A549 (cell line): ENCODE measurements at regions of chr11 and their contacts with region 1.

Region 1: GRCh38 chr11:19561011-19561410 is 151.6 kb upstream of the NAV2 start:
- DNase-seq: no peak
- ATAC-seq: no peak
- H3K4me3 ChIP-seq: no peak overlapping the region
- H3K27ac ChIP-seq: no peak overlapping the region
- H3K4me1 ChIP-seq: 0 out of 3 replicates have a peak, but pooled peaks cover 4% of the 10 kb centered on the region
- CTCF ChIP-seq: no peak
- EP300 ChIP-seq: no peak
- POLR2A ChIP-seq: no peak
- RAD21 ChIP-seq: no peak

Region 2: DNA sequence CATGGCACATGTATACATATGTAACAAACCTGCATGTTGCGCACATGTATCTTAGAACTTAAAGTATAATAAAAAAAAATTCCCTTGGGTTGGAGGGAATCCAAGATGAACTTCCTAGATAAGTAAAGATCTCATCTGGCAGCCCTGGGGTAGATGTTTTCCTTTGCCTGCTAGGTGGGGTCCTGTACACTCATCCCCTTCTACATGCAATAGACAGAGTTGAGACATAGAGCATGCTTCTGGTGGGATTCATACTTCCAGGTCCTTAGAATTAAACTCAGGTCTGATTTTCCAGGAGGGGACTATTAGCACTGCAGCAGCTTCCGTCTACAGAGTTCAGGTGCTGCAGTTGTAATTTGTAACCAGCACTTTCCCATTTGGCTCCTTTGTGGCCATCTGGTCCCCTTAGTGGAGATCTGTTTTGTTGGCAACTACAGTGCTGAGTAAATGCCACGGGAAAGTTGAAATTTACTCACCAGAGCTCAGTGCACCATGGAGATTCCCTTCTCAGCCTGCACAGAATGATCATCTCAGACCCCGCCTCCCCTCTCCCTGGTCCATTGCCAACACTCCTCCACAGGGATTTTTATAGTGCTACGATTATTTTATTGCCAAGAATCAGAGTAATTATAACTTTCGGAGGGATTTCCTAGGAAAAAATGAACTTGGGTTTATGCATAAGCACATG is 100.1 kb before region 1 on chr11:
- CTCF ChIA-PET with region 1: no interaction called
- POLR2A ChIA-PET with region 1: no interaction called
- DNase-seq: no peak
- ATAC-seq: no peak
- H3K4me3 ChIP-seq: no peak overlapping the region
- H3K27ac ChIP-seq: no peak overlapping the region
- H3K4me1 ChIP-seq: no peaks in the 10 kb centered on the region
- CTCF ChIP-seq: no peak
- EP300 ChIP-seq: no peak
- POLR2A ChIP-seq: no peak
- RAD21 ChIP-seq: no peak

Region 3: DNA sequence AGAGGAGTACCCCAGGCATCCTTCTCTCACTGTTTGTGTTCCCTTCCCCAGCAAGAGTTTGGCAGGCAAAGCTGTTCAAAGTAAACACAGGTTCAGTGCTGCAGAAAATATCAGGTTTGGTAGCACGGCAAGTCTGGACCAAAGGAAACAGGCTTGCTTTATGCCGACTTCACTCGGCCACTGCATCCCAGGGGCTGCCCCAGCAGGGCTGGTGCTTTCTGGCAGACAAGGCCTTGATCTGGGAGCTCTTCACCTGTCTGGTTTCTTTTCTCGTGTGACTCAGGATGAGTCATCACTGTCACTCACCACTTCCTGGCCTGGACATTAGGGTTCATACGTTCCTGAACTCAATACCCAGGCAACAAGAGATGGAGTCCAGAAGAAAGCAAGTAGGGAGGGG is 99.1 kb after region 1 on chr11:
- CTCF ChIA-PET with region 1: interaction called, 31 read pairs
- POLR2A ChIA-PET with region 1: no interaction called
- DNase-seq: peak; percentile 72 to 81
- ATAC-seq: peak; percentile 80 to 88; a peak in 5 of 6 replicates
- H3K4me3 ChIP-seq: no peak overlapping the region
- H3K27ac ChIP-seq: peak overlapping the region; percentile 46 to 66
- H3K4me1 ChIP-seq: peaks cover 19% of the 10 kb centered on the region
- CTCF ChIP-seq: no peak
- EP300 ChIP-seq: no peak
- POLR2A ChIP-seq: no peak
- RAD21 ChIP-seq: no peak

Region 4: DNA sequence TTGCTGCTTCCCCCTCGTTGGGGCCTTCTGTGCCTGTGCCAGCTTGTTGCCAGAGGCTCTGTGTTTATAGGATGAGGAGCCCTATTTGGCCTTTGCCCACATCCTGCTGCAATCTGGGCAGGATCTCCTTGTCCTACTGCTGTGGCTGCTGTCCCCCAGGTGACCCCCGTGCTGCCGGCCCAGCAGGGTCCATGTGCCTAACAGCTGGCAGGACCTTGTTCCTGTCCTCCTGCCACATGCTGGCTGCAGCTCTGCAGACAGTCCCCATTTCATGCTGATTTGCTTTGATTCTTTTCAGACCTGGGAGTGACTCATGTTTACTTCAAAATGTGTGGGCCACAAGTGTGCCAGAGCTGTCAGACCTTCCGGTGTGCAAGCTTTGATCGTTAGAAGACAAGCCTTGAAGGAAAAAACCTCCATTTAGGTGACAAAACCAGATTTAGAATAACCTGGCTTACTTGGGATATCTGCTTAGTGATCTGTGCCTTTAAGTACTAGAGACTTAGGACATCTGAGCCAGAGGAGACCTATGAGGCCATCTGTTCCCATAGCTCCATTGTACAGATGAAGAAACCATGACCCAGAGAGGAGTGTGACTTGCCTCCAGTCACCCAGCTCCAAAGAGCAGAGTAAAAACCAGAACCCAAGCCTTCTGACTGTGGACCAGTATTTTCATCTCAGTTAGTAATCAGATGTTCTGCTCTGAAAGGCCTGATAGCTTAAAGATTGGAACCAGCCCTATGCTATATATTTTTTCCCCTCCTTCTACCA is 162.7 kb after region 1 on chr11:
- CTCF ChIA-PET with region 1: interaction called, 37 read pairs
- POLR2A ChIA-PET with region 1: no interaction called
- DNase-seq: no peak
- ATAC-seq: no peak; a peak in 1 of 6 replicates
- H3K4me3 ChIP-seq: no peak overlapping the region
- H3K27ac ChIP-seq: peak overlapping the region; percentile 25 to 59; a peak in 3 of 6 replicates
- H3K4me1 ChIP-seq: peaks cover 18% of the 10 kb centered on the region
- CTCF ChIP-seq: no peak
- EP300 ChIP-seq: no peak
- POLR2A ChIP-seq: no peak
- RAD21 ChIP-seq: no peak

Region 5: GRCh38 chr11:19735157-19735908 is 174.3 kb after region 1 on chr11:
- CTCF ChIA-PET with region 1: interaction called, 59 read pairs
- POLR2A ChIA-PET with region 1: no interaction called
- DNase-seq: no peak
- ATAC-seq: no peak
- H3K4me3 ChIP-seq: no peak overlapping the region
- H3K27ac ChIP-seq: no peak overlapping the region
- H3K4me1 ChIP-seq: 0 out of 3 replicates have a peak, but pooled peaks cover 3% of the 10 kb centered on the region
- CTCF ChIP-seq: no peak
- EP300 ChIP-seq: no peak
- POLR2A ChIP-seq: no peak
- RAD21 ChIP-seq: 0 out of 5 replicates have a peak, but pooled peaks of 1 of the 2 experiments have one; percentile 5

Region 6: GRCh38 chr11:19756675-19757475 is 195.9 kb after region 1 on chr11:
- CTCF ChIA-PET with region 1: interaction called, 34 read pairs
- POLR2A ChIA-PET with region 1: no interaction called
- DNase-seq: no peak
- ATAC-seq: no peak
- H3K4me3 ChIP-seq: no peak overlapping the region
- H3K27ac ChIP-seq: no peak overlapping the region
- H3K4me1 ChIP-seq: no peaks in the 10 kb centered on the region
- CTCF ChIP-seq: no peak
- EP300 ChIP-seq: no peak
- POLR2A ChIP-seq: no peak
- RAD21 ChIP-seq: no peak

Region 7: DNA sequence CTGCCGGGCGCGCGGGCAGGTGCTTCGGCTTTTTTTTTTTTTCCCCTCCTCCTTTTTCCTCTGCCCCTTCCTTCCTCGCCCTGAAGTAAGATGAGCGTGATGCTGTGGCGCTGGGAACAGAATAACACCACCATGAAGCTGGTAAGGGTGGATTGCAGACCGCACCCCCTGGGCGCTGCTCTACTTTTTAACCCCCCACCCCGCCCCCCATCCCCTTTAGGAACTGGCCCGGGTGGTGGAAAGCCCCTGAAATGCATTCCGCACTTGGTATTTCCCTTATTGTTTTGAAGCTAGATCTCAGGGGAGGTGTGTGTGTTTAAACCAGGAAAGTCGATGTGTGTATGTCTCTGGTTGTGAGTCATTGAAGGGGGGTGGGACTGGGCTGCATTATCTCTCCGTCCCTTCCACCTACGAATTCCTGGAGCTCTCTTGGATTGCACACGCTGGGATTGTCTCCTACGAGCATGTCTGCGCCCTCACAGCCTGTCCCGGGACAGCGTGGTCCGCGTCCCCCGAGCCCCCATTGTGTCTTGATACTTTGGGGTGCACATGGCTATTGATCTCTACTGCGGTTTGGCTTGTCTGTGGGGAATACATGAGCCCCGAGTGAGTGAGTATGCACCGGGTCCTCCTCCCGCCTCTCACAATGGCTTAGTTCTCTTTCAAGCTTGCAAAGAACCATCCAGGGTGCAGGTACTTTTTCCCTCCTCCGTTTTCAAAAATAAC is 216.5 kb after region 1 on chr11:
- CTCF ChIA-PET with region 1: interaction called, 10 read pairs
- POLR2A ChIA-PET with region 1: no interaction called
- DNase-seq: peak; percentile 32 to 68
- ATAC-seq: peak; percentile 51 to 83
- H3K4me3 ChIP-seq: peak overlapping the region; percentile 64
- H3K27ac ChIP-seq: peak overlapping the region; percentile 67 to 91
- H3K4me1 ChIP-seq: peaks cover 9% of the 10 kb centered on the region; the same call in 1 of the 3 replicates
- CTCF ChIP-seq: no peak
- EP300 ChIP-seq: no peak
- POLR2A ChIP-seq: no peak
- RAD21 ChIP-seq: no peak